Activated CD8-positive, alpha-beta T cell treated with anti-CD3 and anti-CD28 coated beads, Interleukin-2, amount 10 ng/mL, durations not matched to agents 7 days and 5 days (primary cell): ENCODE measurements at regions of chr10 and their contacts with region 1.

Region 1: DNA sequence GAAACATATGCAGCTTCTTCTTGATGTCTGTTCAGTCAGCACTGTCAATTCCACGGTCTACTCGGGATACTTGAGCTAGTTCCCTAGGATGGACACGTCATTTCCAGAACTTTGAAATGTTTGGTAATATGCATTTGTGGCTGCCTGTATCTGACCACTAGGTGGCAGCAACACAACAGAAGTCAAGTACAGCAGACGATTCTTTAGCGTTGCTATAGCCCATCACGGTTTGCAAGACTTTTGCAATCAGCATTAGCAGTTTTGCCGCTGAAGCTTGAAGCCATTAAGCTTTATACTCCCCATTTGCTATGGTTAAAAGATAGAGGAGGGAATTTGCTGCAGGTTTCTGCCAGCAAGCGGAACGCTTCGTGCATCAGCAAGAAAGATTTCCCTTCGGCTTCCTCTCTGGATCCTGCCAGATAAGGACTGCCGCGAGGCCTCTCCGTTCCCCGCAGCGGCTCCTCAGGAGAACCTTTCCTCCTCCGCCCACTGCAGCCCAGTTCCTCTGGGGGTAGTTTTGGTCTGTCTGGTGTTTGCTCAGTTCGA is 63.5 kb downstream of the ABCC2 start:
- DNase-seq: peak; percentile 84
- ATAC-seq: peak; percentile 91
- H3K4me3 Mint-ChIP-seq: peak overlapping the region; percentile 43
- H3K27ac Mint-ChIP-seq: no peak overlapping the region
- H3K4me1 Mint-ChIP-seq: peaks cover 12% of the 10 kb centered on the region
- H3K27me3 Mint-ChIP-seq: no peaks in the 10 kb centered on the region

Region 2: GRCh38 chr10:99870123-99870730 is 24.3 kb after region 1 on chr10:
- CTCF ChIA-PET with region 1: interaction called, 21 read pairs
- POLR2A ChIA-PET with region 1: no interaction called
- DNase-seq: peak; percentile 46
- ATAC-seq: peak; percentile 92
- H3K4me3 Mint-ChIP-seq: peak overlapping the region; percentile 56
- H3K27ac Mint-ChIP-seq: peak overlapping the region; percentile 18
- H3K4me1 Mint-ChIP-seq: peaks cover 16% of the 10 kb centered on the region
- H3K27me3 Mint-ChIP-seq: peaks cover 61% of the 10 kb centered on the region

Region 3: DNA sequence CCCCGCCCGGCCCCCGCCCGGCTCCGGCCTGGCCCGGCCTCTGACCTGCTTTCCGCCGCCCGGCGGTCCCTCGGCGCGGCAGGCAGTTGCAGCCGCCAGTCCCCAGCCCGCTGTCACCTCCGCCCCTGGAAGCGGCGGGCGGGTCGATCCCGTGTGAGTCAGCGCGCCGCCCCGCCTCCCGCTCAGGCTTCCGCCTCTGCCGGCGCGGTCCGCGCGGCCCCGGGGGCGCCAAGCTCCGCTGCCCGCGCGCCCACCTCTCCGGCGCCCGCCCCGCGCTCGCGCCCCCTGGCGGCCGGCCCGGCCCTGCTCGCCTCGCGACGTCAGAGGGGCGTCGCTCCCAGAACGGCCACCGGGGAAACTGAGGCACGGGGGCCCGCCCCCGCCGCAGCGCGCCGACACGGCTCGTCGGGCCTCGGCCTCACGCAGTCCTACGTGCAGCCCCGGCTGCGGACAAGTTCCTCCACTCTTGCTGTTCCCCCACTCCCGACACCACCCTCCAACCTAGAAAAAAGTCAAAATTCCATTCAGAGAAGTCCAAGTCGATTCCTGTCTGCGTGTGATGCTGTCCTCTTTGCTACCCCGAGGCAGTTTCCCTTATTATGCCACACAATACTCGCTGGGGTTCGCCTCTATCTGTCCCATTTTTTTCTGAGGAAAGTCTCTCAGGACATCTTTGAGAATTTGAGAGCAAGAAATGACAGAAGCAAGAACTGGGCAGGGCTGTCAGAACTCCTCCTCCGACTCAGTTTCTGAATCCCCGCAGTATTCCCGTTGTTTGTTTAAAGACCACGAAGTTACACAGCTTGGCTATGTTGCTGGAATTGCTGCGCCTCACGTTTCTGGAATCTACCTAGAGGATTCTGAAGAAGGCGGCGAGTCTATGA is 164.1 kb after region 1 on chr10 and contains the start of gene DNMBP:
- CTCF ChIA-PET with region 1: interaction called, 67 read pairs
- POLR2A ChIA-PET with region 1: no interaction called
- DNase-seq: peak; percentile 85
- ATAC-seq: peak; percentile 98
- H3K4me3 Mint-ChIP-seq: peak within 1 kb of the TSS; percentile 86
- H3K27ac Mint-ChIP-seq: peak within 1 kb of the TSS; percentile 77
- H3K4me1 Mint-ChIP-seq: peaks cover 37% of the 10 kb centered on the region
- H3K27me3 Mint-ChIP-seq: peaks cover 36% of the 10 kb centered on the region
- total RNA-seq, gene DNMBP: 4.1 to 4.4 TPM

Region 4: GRCh38 chr10:100025576-100025975 is 179.7 kb after region 1 on chr10:
- CTCF ChIA-PET with region 1: interaction called, 10 read pairs
- POLR2A ChIA-PET with region 1: no interaction called
- DNase-seq: no peak
- ATAC-seq: no peak
- H3K4me3 Mint-ChIP-seq: no peak overlapping the region
- H3K27ac Mint-ChIP-seq: no peak overlapping the region
- H3K4me1 Mint-ChIP-seq: peaks cover 7% of the 10 kb centered on the region
- H3K27me3 Mint-ChIP-seq: no peaks in the 10 kb centered on the region

Region 5: GRCh38 chr10:100373298-100374136 is 527.6 kb after region 1 on chr10:
- CTCF ChIA-PET with region 1: no interaction called
- POLR2A ChIA-PET with region 1: no interaction called
- DNase-seq: peak; percentile 96
- ATAC-seq: peak; percentile 83
- H3K4me3 Mint-ChIP-seq: no peak overlapping the region
- H3K27ac Mint-ChIP-seq: no peak overlapping the region
- H3K4me1 Mint-ChIP-seq: peaks cover 50% of the 10 kb centered on the region
- H3K27me3 Mint-ChIP-seq: no peaks in the 10 kb centered on the region